Right cardiac atrium (tissue), 5 donors: ENCODE measurements at regions of chr15 and their contacts with region 1.

Region 1: DNA sequence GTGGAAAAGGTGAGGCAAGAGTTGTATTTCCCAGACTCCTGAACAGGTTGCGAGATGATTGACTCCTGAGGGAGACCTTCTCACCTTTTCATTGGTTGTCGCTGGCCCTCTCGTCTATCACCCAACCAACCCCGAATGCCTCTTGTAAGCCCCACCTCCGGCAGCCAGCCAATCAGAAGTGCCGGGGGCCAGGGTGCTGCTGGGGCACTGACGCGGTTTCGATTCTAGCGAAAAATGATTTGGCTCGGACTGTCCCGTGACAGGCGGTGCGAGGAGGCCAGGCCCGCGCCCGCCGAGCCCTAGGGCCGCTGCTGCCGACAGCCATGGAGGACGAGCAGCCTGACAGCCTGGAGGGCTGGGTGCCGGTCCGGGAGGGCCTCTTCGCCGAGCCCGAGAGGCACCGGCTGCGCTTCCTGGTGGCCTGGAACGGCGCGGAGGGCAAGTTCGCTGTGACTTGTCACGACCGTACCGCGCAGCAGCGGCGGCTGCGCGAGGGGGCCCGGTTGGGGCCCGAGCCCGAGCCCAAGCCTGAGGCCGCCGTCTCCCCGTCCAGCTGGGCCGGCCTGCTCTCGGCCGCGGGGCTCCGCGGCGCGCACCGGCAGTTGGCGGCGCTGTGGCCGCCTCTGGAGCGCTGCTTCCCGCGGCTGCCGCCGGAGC is at the start of gene WHAMM:
- DNase-seq: peak; percentile 99
- ATAC-seq: peak; percentile 98 to 99
- H3K4me3 ChIP-seq: peak within 1 kb of the TSS; percentile 77
- H3K27ac ChIP-seq: peak within 1 kb of the TSS; percentile 97
- H3K4me1 ChIP-seq: no peaks in the 10 kb centered on the region
- H3K27me3 ChIP-seq: no peaks in the 10 kb centered on the region
- total RNA-seq, gene WHAMM: 5.6 to 6.6 (median 5.9) TPM

Region 2: DNA sequence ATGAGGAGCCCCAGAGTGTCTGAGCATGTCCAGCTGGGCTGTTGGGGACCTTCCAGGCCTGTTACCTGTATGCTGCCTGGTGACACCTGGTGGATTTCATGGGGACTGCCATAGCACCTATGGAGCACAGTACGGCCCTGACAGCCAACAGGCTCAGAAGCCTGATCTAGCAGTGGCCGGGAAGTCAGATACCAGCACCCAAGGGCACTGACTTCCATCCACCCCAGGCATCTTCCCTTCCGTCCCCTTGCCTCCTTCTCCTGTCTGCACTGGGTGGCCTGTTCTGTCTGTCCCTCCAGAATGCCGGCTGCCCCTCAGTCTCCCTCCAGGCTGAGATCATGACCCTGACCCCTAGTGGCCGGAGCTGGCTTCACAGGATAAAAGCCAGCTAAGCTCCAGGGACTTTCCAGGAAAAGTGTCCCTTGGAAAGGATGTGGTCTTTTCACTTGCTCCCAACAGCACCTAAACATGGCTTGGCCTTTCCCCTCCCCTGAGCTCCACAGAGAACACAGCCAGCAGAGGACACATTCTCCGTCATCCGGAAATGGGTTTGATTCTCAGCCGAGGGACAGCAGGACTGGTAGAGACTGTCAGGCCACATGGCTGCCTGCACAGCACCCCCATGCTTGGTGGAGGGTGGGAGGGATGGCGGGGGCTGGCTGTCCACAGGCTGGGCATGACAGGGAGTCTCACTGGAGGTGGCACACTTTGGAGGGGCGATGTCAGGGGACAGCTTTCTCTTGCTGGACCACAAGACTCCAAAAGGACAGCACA is 278.7 kb before region 1 on chr15:
- intact Hi-C with region 1: loop called in 1 of 4 experiments (anchors 10 kb)
- DNase-seq: peak; percentile 59 to 82 (median 81)
- ATAC-seq: peak; percentile 85 to 89
- H3K4me3 ChIP-seq: no peak overlapping the region
- H3K27ac ChIP-seq: no peak overlapping the region
- H3K4me1 ChIP-seq: no peaks in the 10 kb centered on the region
- H3K27me3 ChIP-seq: no peaks in the 10 kb centered on the region

Region 3: DNA sequence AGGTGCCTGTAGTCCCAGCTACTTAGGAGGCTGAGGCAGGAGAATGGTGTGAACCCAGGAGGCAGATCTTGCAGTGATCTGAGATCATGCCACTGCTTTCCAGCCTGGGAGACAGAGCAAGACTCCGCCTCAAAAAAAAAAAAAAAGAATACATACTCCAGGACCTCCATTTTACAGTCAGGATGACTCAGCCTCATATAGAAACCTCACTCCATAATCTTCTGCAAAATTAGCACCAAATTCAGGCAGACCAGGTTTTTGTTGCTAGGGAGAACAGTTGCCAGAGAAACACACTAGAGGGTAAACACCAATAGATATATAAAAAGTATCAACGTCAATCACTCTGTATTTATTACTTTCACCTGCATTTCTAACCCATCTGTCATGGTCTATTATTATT is 71.6 kb before region 1 on chr15:
- intact Hi-C with region 1: no loop called
- DNase-seq: no peak
- ATAC-seq: no peak
- H3K4me3 ChIP-seq: no peak overlapping the region
- H3K27ac ChIP-seq: no peak overlapping the region
- H3K4me1 ChIP-seq: no peaks in the 10 kb centered on the region
- H3K27me3 ChIP-seq: no peaks in the 10 kb centered on the region

Region 4: DNA sequence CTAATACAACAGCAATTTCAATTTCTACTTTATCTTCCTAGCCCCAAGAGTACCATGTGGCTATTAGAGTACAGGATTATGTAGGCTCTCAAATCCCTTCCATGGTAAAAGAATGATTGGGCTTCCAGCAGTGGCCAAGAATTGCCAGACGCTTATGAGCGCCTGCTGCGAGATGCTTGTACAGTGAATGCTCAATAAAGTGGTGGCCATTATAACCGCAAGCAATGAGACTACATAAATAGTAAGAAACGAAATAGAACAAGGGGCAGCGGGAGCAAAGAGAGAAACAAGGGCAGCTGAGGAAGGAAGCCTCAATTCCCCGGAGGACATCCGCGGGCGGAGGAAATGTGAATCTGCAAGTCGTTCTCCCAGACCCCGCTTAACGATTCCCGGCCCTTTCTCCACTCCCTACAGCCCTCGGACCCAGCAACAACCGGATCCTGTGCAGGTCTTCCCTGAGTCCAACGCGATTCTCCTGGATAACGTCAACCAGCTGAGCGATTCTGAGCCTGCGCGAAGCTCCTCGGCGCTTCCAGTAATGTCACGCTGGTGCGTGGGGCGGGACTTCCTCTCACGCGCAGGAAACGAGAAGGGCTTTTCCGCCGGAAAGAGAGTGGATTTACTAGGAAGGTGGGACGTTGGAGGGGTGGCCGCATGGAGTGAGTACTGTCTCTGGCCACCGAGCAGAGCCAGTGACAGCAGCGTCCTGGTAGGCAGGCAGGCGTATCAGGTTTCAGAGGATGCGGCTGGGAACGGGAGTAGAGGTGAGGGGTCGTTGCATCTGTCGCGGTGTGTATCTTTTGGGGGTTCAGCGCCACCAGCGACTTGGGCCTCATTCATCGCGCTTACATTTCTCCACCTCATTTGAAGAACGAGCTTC is 59.3 kb before region 1 on chr15:
- intact Hi-C with region 1: loop called in 1 of 4 experiments (anchors 10 kb)
- DNase-seq: peak; percentile 93 to 96 (median 95)
- ATAC-seq: peak; percentile 99
- H3K4me3 ChIP-seq: peak overlapping the region; percentile 93
- H3K27ac ChIP-seq: peak overlapping the region; percentile 91
- H3K4me1 ChIP-seq: peaks cover 8% of the 10 kb centered on the region
- H3K27me3 ChIP-seq: no peaks in the 10 kb centered on the region